ENCODE measurements at regions of chr3 and their contacts with region 1.

Region 1: GRCh38 chr3:74282202-74282601 is 332.3 kb downstream of the CNTN3 start:
- DNase-seq: no peak
- H3K4me3 ChIP-seq: no peak overlapping the region
- H3K27ac ChIP-seq: no peak overlapping the region
- H3K27me3 ChIP-seq: no peaks in the 10 kb centered on the region
- CTCF ChIP-seq: no peak

Region 2: DNA sequence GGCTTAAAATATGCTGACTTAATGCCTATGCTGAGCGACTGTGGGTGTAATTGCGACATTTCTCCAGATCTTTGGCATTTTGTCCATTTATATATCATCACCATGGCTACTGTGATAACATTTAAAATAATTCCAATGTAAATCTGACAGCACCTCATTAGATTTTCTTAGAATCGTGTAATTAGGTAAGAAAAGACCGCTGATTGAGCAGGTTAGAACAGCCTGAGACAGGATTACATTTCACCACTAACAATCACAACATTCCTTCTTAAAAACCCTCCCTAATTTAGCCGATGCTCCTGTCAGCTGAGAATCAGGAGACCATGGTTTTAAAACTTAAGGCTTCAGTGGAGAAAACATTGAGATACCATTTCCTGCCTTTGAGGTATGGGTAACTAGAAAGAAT is 202.1 kb before region 1 on chr3:
- CTCF ChIA-PET with region 1: no interaction called
- POLR2A ChIA-PET with region 1: no interaction called
- DNase-seq: no peak
- H3K4me3 ChIP-seq: no peak overlapping the region
- H3K27ac ChIP-seq: no peak overlapping the region
- H3K27me3 ChIP-seq: peaks cover 3% of the 10 kb centered on the region
- CTCF ChIP-seq: no peak

Region 3: DNA sequence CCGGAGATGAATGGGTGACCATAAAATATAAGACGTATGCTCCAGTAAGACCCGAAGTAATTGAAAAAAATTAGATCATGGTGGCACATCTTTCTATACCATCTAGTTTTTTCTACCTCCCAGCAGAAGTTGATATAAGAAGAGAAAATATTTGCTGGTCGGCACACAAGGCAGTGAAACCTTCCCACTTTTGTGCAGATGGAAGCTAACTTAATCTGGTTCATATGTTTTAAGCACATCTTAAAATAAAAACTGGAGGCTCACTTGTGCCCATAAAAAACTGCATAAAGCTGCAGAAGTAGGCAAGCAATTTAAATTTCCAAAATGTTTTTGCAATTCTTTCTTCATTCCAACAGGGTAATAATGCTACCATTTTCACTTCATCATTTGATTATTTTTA is 117.0 kb before region 1 on chr3:
- CTCF ChIA-PET with region 1: no interaction called
- POLR2A ChIA-PET with region 1: no interaction called
- DNase-seq: no peak
- H3K4me3 ChIP-seq: no peak overlapping the region
- H3K27ac ChIP-seq: no peak overlapping the region
- H3K27me3 ChIP-seq: no peaks in the 10 kb centered on the region
- CTCF ChIP-seq: no peak

Region 4: DNA sequence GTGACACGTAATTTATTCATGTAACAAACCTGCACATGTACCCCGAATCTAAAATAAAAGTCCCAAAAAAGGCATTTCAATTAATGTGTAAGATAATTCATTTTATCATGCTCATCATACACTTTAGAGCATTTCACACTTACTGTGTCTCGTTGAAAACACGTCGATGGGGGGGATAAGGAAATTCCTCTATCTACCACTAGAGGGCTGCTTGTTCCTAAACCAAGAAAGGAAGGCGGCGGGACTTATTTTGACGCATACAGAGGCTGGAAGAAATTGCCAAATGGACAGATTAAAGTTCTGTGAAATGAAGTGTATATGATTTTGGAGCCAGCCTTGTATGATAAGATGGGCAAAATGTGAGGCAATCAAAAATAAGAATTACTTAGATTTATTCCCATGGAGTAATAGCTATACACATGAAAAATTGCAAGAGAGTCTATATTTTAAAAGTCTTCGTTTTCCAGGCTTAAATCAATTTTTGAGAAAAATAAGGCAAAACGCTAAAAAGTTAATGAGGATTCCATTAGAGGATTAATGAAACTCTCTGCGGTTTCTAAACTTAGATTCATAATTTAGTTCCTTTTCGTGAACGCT is 14.5 kb before region 1 on chr3:
- CTCF ChIA-PET with region 1: interaction called, 12 read pairs
- POLR2A ChIA-PET with region 1: no interaction called
- DNase-seq: peak; percentile 20
- H3K4me3 ChIP-seq: no peak overlapping the region
- H3K27ac ChIP-seq: no peak overlapping the region
- H3K27me3 ChIP-seq: no peaks in the 10 kb centered on the region
- CTCF ChIP-seq: peak; percentile 93

Measured in AG04450 (cell line).